ENCODE measurements at regions of chr1 and their contacts with region 1.

Region 1: GRCh38 chr1:44835738-44836675 is 7.0 kb downstream of the PTCH2 start:
- DNase-seq: peak; percentile 92
- ATAC-seq: peak; percentile 82 to 86

Region 2: DNA sequence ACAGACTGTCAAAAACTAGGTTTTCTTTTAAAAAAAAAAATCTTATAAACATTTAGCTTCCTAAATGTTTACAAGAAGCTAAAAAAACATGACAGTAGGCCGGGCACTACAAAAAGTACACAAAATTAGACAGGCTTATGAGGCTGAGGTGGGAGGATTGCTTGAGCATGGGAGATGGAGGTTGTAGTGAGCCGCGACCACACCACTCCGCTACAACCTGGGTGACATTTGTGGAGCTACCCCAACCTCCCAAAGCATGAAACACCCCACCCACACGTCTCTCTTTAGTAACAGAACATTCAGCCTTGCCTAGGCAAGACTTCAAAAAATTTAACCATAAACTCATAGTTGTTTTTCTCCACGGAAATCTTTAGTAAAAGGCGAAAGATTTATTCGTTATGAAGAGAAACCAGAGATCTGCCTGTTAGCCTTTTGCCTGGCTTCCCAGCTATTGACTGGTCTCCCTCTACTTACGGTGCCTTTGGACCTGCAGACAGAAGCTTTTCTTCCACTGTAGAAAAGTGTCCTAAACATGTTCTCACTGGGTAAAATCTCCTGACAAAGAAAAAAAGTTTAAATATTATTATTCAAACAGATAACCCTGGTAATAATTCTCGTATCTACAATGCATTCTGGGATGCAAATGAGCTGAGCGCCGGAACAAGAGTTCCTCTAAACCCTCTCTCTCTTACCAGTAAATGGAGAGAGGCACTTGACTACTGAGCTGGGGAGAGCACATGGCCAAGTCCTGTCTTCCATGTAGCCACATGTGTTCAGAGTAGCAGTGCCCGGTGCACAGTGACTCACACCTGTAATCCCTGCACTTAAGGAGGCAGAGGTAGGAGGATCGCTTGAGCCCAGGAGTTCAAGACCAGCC is 114.3 kb before region 1 on chr1:
- intact Hi-C with region 1: no loop called
- DNase-seq: no peak
- ATAC-seq: peak; percentile 65 to 85

Region 3: GRCh38 chr1:44786138-44786840 is 49.7 kb before region 1 on chr1:
- intact Hi-C with region 1: loop called (anchors 5 to 10 kb)
- DNase-seq: peak; percentile 69
- ATAC-seq: peak; percentile 64 to 73

Region 4: GRCh38 chr1:44867801-44868200 is 31.8 kb after region 1 on chr1:
- intact Hi-C with region 1: no loop called
- DNase-seq: no peak
- ATAC-seq: no peak

Region 5: DNA sequence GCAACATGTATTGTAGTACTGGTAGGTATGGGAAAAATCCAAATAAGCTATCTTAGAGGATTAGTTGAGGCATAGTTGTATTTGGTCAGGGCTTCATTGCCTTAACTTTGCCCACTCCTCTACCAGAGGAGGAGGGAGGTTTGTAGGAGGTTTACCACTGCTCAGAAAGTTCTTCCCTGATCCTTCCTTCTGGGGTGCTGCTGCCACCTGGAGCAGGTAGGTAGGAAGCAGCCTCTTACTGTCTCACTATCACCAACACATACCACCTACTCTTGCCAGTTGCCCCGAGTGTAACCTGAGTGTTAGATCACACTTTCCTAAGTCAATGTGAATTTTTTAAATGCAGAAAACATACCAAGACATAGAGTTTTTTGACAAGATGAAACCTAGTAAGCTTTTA is 394.5 kb after region 1 on chr1:
- intact Hi-C with region 1: no loop called
- DNase-seq: no peak
- ATAC-seq: no peak